ENCODE measurements at regions of chr10 and their contacts with region 1.

Region 1: DNA sequence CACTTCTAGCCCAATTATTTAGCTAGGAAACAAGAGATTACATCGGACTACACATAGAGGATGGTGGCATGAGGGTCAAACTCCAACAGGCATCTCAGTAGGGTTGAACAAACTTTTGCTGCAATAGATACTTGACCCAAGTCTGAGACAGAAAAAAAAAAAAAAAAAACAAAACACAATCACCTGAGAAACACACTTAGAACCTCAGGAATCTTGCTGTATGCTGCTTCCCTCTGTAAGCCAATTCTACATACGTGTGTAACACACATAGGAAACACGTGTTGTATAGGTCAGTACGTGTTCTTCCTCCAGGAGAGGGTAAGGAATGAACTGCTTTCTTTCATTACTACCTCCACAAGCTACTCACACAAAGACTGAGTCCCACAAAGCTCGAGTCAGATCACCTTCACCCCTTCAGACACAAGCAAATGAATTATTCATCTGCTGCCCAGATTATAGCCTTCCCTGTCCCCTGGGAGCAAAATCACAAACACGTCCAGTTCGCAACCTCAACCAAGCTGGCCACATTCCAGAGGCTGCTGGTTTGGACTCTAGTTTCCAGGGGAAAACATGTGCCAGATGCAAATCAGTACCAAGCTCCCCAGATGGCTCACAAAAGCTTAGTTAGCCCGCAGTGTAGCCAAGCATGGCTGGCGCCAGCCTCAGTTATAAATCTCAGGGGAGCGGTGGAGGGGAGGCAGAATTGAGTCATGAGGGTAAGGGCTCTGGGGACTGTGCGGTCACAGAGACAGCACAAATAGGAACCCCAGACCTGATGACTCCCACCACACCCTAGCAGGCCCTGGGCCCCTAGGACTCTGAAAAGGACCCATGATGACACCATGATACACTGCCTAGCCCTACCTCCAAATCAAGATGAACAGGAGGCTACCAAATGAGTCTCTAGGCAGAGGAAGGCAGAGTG is 15.1 kb downstream of the PSAP start:
- DNase-seq: peak; percentile 89
- CTCF ChIP-seq: no peak

Region 2: DNA sequence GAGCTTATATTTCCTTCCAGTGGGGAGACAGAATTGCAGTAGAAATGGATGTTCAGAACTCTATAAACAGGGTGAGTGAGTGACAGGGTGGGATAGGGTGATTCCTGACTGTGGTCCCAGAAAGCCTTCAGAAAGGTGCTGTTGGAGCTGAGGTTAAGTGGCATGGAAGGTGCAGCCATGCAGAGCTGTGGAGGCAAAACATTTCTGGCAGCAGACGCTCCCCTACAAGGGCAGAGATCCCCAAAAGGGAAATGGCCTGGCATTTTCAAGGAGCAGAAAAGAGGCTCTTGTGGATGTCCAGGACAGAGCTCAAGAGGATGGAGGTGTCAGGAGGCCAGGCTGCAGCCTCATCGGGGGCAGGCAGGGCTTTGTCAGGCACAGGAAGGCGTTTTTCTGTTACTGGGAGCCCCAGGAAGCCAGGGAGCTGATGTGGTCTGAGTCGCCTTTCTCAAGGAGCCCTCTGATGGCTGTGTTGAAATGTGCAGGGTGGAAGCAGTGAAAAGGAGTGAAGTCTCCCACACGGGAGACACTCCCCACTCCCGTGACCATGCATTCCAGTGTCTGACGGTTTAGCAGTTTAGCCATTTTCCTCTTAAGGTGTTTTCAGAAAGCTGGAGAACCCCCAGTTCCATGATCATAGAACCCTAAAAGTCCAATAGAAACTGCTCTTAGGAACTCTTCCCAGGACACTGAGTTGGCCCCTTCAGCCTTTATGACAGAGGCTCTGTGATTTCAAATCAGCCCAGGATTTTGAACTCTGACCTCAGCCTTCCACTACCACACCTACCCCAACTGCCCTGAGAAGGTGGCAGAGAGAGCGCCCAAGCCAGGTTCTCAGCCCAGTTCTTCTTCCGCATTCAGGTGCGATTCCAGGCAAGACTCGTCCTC is 212.6 kb before region 1 on chr10:
- CTCF ChIA-PET with region 1: no interaction called
- POLR2A ChIA-PET with region 1: no interaction called
- DNase-seq: no peak
- CTCF ChIP-seq: no peak

Region 3: GRCh38 chr10:71687077-71687476 is 148.9 kb before region 1 on chr10:
- CTCF ChIA-PET with region 1: no interaction called
- POLR2A ChIA-PET with region 1: no interaction called
- DNase-seq: no peak
- CTCF ChIP-seq: no peak

Region 4: DNA sequence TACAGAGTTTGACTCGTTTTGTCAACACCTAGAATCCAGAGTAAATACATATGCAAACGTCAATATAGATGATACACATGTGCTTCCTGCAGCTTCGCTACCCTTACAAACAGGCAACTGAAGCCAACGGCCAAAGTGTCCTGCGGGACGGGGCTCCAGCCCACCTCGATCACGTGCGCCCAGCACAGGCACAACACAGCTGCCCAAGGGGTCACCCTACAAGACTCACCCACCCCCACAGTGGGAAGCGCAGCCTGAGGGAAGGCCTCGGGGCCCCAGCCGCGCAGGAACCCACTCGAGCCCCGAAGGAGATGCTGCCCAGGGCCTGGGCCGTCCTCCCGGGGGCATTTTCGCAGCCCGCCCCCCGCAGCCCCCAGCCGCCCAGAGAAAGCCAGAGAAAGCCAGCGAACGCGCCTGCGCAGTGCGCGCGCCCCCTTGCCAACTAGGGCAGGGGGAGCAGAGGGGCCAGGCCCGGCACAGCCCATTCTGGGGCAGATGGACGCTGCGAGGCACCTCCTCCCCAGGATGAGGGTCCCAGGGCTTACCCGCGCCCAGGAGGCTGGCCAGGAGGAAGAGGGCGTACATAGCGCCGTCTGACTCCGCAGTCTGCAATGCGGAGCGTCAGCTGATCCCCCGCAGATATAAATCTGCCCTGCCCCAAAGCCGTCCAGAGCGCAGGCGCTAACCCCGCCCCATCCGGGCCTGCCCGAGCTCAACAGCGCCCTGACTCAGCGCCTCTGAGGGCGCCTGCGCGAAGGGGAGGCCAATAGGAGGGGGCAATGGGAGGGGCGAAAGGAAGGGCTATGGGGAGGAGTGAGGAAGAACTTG is 14.9 kb after region 1 on chr10 and contains the start of gene PSAP:
- CTCF ChIA-PET with region 1: interaction called, 48 read pairs
- POLR2A ChIA-PET with region 1: interaction called, 25 read pairs
- DNase-seq: peak; percentile 100
- CTCF ChIP-seq: no peak

Region 5: DNA sequence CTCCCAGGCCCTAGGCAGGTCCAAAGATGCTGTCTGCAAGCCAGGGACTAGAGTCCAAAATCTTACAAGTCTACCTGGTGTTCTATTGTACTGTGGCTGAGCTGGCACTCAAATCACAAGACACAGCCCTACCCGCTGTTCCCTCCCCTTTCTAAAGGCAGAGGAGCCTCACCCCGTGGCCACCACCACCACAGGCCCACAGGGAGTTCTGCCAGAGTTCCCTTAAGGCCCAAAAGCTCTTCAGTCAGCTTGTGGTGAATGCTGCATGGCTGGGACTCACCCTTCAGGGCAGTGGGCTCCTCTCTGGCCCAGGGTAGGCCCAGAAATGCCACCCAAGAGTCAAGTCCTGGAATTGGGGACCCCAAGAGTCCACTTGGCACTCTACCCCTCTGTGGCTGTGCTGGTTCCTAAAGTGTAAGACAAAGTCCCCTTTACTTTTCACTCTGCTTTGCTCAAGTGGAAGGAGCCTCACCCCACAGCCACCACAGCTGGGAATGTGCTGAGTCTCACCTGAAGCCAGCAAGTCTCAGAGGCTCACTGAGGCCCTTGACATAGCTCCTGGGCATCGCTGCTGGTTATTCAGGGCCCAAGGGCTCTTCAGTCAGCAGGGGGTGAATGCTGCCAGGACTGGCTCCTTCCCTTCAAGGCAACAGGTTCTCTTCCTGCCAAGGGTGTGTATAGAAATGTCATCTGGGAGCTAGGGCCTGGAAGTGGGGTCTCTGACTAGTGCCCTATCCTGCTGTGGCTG is 63.9 kb after region 1 on chr10:
- CTCF ChIA-PET with region 1: interaction called, 90 read pairs
- POLR2A ChIA-PET with region 1: interaction called, 4 read pairs
- DNase-seq: no peak
- CTCF ChIP-seq: no peak

Measured in GM10248 (cell line).